Activated CD8-positive, alpha-beta T cell treated with anti-CD3 and anti-CD28 coated beads, Interleukin-2, amount 10 ng/mL, durations not matched to agents 7 days and 5 days (primary cell): ENCODE measurements at regions of chr11 and their contacts with region 1.

Region 1: GRCh38 chr11:78188286-78189173 is at the starts of genes KCTD21 and USP35:
- DNase-seq: peak; percentile 95
- ATAC-seq: peak; percentile 97
- H3K4me3 Mint-ChIP-seq: peak within 1 kb of the TSS; percentile 99
- H3K27ac Mint-ChIP-seq: peak within 1 kb of the TSS; percentile 93
- H3K4me1 Mint-ChIP-seq: peaks cover 51% of the 10 kb centered on the region
- H3K27me3 Mint-ChIP-seq: no peaks in the 10 kb centered on the region
- total RNA-seq, gene KCTD21: 7.1 to 7.8 TPM
- total RNA-seq, gene USP35: 11.9 to 12.8 TPM

Region 2: DNA sequence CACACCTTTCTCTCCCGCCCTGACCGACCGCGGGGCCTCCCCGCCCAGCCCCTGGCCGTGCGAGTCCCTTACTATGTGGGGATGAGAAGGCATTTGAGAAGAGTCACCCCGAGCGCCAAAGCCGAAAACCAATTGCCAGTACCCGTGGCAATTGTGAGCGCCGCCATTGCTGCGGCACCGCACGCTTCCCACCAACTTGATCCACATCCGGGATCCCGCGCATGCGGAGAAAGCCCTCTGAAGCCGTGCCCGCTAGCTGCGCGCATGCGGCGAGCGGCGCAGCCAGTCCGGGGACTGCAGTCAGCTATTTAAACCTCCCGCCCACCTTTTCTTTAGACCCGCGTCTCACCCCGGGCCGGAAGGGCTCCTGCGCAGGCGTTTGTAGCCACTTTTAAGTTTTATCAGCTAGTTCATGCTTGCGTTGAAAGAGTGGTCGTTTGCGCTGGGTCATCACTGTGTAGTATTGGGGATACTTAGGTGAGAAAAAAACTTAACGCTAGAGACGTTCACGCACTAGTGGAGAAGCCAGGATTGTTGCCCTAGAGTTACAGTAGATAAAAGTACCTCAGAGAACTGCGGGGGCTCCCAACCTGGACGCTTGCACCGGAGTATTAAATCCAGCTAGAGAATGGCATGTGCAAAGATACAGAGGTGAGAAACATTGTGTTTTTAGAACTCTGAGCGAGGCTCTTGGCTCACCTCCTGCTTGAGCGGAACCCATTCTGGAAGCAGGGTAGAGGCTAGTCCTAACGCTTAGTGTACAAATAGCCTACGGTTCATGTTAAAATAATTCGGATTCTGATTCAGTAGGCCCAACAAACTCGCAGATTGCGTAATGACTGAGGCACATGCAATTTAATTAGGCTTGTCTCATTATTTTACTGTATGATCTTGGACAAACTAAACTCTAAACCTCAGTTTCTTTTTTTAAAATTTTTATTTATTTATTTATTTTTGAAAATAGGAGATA is 48.8 kb before region 1 on chr11 and contains the start of gene ALG8:
- CTCF ChIA-PET with region 1: interaction called, 12 read pairs
- POLR2A ChIA-PET with region 1: interaction called, 8 read pairs
- DNase-seq: peak; percentile 97
- ATAC-seq: peak; percentile 97
- H3K4me3 Mint-ChIP-seq: peak within 1 kb of the TSS; percentile 80
- H3K27ac Mint-ChIP-seq: peak within 1 kb of the TSS; percentile 93
- H3K4me1 Mint-ChIP-seq: peaks cover 44% of the 10 kb centered on the region
- H3K27me3 Mint-ChIP-seq: no peaks in the 10 kb centered on the region
- total RNA-seq, gene ALG8: 49.9 to 51.7 TPM

Region 3: DNA sequence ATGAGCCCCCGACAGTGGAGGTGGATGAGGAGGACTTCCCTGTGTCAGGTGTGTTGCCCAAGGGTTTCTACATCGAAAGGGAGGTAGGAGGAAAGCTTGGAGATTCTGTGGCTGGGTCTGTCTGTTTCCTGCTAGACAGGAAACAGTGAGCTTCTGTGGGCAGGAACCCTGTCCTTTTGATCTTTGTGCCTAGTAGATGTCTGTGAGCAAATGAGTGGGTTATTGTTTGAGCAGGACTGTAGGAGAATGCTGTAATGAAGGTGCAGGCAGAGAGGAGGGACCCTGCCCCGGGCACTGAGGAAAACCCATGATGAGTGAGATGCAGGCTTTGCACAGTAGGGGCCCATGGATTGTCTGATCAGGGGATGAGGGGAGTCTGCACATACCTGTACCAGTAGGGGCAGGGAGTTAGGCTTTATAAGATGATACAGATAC is 14.2 kb after region 1 on chr11:
- CTCF ChIA-PET with region 1: interaction called, 11 read pairs
- POLR2A ChIA-PET with region 1: interaction called, 10 read pairs
- DNase-seq: peak; percentile 72
- ATAC-seq: peak; percentile 91
- H3K4me3 Mint-ChIP-seq: peak overlapping the region; percentile 79
- H3K27ac Mint-ChIP-seq: peak overlapping the region; percentile 97
- H3K4me1 Mint-ChIP-seq: peaks cover 47% of the 10 kb centered on the region
- H3K27me3 Mint-ChIP-seq: no peaks in the 10 kb centered on the region

Region 4: DNA sequence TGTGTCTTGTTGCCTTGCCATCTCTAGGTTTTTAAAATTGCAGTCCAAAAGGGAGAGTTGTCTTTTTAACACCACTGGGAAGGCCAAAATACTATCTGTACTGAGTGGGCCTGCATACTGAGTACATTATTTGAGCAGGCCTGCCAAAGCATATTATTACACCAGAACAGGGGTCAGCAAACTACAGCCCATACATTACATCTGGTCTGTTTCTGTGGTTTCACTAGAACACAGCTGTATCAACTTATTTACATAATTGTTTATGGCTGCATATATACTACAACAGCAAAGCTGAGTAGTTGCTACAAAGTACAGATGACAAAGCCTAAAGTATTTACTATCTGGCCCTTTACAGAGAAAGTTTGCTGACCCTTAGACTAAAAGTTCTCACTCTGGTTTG is 74.2 kb after region 1 on chr11:
- CTCF ChIA-PET with region 1: no interaction called
- POLR2A ChIA-PET with region 1: no interaction called
- DNase-seq: no peak
- ATAC-seq: no peak
- H3K4me3 Mint-ChIP-seq: no peak overlapping the region
- H3K27ac Mint-ChIP-seq: no peak overlapping the region
- H3K4me1 Mint-ChIP-seq: peaks cover 2% of the 10 kb centered on the region
- H3K27me3 Mint-ChIP-seq: peaks cover 2% of the 10 kb centered on the region